Activated CD4-positive, alpha-beta T cell treated with anti-CD3 and anti-CD28 coated beads for 36 hours (primary cell): ENCODE measurements at regions of chr17 and their contacts with region 1.

Region 1: GRCh38 chr17:28716740-28717577 is 709 bp downstream of the RAB34 start:
- DNase-seq: peak; percentile 29
- ATAC-seq: no peak
- H3K4me3 Mint-ChIP-seq: peak overlapping the region; percentile 57
- H3K27ac Mint-ChIP-seq: no peak overlapping the region
- H3K4me1 Mint-ChIP-seq: peaks cover 30% of the 10 kb centered on the region
- H3K27me3 Mint-ChIP-seq: peaks cover 19% of the 10 kb centered on the region

Region 2: DNA sequence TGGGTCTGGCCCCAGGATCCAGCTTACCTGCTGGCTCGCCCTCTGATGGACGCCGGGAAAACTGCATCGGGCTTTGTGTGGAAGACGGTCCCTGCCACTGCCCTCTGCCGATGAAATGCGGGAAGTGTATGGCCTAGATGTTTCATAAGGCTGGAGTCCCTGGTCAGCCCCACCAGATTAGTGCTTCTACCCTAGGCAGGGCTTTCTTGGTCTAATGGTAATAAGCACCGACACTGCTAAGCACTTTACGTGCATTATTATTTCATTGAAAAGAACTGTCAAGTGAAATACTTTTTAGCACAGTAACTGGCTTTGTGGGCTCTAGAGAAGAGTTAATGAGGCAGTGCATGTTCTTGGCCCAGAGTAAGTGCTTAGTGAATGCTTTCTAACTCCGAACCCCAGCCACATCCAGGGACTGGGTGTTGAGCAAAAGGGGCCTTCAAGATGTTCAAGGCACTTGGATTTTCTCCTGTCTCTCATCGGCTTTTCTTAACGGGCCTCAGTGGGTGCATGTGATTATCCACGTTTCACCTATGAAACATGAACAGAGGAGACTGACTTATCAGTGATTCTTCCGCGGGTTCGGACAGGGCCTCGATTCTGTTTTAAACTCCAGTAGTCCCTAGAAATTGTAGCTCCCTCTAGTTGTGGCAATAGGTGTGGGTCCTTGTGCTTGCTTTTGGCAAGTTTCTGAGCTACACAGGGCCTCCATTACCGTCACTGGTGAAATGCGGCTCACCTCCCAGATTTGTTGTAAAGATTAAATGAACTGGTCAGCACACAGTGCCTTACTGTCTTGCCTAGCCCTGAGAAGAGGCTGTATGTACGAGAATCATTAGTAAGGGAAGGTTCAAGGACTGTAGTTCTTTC is 33.5 kb after region 1 on chr17:
- CTCF ChIA-PET with region 1: interaction called, 11 read pairs
- POLR2A ChIA-PET with region 1: no interaction called
- intact Hi-C with region 1: no loop called
- DNase-seq: peak; percentile 96
- ATAC-seq: peak; percentile 87
- H3K4me3 Mint-ChIP-seq: no peak overlapping the region
- H3K27ac Mint-ChIP-seq: peak overlapping the region; percentile 60
- H3K4me1 Mint-ChIP-seq: peaks cover 43% of the 10 kb centered on the region
- H3K27me3 Mint-ChIP-seq: no peaks in the 10 kb centered on the region

Region 3: GRCh38 chr17:28796062-28796461 is 79.1 kb after region 1 on chr17:
- CTCF ChIA-PET with region 1: no interaction called
- POLR2A ChIA-PET with region 1: no interaction called
- intact Hi-C with region 1: no loop called
- DNase-seq: no peak
- ATAC-seq: no peak
- H3K4me3 Mint-ChIP-seq: no peak overlapping the region
- H3K27ac Mint-ChIP-seq: no peak overlapping the region
- H3K4me1 Mint-ChIP-seq: peaks cover 10% of the 10 kb centered on the region
- H3K27me3 Mint-ChIP-seq: no peaks in the 10 kb centered on the region

Region 4: GRCh38 chr17:28902819-28903545 is 186.0 kb after region 1 on chr17 and contains the start of gene DHRS13:
- CTCF ChIA-PET with region 1: no interaction called
- POLR2A ChIA-PET with region 1: no interaction called
- intact Hi-C with region 1: loop called in 1 of 2 experiments (anchors 1 kb)
- DNase-seq: peak; percentile 97
- ATAC-seq: peak; percentile 89
- H3K4me3 Mint-ChIP-seq: peak within 1 kb of the TSS; percentile 87
- H3K27ac Mint-ChIP-seq: peak within 1 kb of the TSS; percentile 92
- H3K4me1 Mint-ChIP-seq: peaks cover 34% of the 10 kb centered on the region
- H3K27me3 Mint-ChIP-seq: no peaks in the 10 kb centered on the region
- total RNA-seq, gene DHRS13: 23.3 to 29.5 TPM